Heart left ventricle (tissue), 16 donors: ENCODE measurements at regions of chr9 and their contacts with region 1.

Region 1: DNA sequence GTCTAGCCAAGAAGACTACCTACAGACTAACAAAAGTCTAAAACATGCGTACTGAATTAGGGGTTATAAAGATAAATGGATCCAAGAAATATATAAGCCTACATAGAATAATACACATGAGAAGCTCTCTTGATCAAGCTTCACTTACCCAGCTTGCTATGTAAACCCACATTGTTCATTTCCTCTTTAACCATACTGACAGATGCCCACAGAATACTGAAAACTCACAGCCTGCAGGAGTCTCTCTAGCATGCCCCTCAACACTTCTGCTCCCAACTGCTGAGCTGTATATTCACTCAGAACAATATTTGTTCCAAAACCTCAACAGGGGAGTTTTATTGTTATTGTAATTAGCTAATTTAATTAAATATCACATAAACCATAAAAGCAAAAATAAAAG is 52.4 kb downstream of the RFX3 start:
- DNase-seq: no peak
- ATAC-seq: no peak
- H3K4me3 ChIP-seq: no peak overlapping the region
- H3K27ac ChIP-seq: no peak overlapping the region
- H3K4me1 ChIP-seq: peaks cover 0 to 26% (median 7%) of the 10 kb centered on the region in 12 donors
- H3K27me3 ChIP-seq: no peaks in the 10 kb centered on the region
- CTCF ChIP-seq: no peak
- POLR2A ChIP-seq: no peak

Region 2: GRCh38 chr9:3516667-3517330 is 43.4 kb after region 1 on chr9:
- intact Hi-C with region 1: loop called in 3 of 10 experiments (anchors 5 to 10 kb)
- DNase-seq: no peak
- ATAC-seq: no peak
- H3K4me3 ChIP-seq: no peak overlapping the region
- H3K27ac ChIP-seq: no peak overlapping the region
- H3K4me1 ChIP-seq: peaks cover 0 to 22% (median 0%) of the 10 kb centered on the region in 12 donors
- H3K27me3 ChIP-seq: no peaks in the 10 kb centered on the region
- CTCF ChIP-seq: no peak
- POLR2A ChIP-seq: no peak

Region 3: DNA sequence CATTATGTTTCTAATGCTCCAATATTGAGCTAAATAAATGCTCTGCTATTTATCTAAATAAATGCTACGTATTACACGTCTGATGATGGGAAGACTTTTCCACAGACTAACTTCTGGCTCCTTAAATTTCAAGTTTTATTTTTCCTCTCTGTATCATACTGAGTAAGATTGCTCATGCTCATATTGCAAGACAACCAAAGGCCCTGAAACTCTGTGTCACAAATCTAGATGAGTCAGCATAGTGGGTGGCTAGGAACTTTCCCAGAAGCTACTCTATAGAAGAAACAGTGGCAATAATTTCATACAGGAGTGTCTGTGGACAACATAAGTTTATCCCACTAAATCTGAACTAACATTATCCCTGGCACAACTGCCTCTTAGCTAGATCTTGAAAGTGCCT is 105.4 kb after region 1 on chr9:
- intact Hi-C with region 1: no loop called
- DNase-seq: no peak
- ATAC-seq: no peak
- H3K4me3 ChIP-seq: no peak overlapping the region
- H3K27ac ChIP-seq: no peak overlapping the region
- H3K4me1 ChIP-seq: peaks cover 0 to 5% (median 0%) of the 10 kb centered on the region in 12 donors
- H3K27me3 ChIP-seq: no peaks in the 10 kb centered on the region
- CTCF ChIP-seq: no peak
- POLR2A ChIP-seq: no peak